ENCODE measurements at regions of chr1 and their contacts with region 1.

Region 1: DNA sequence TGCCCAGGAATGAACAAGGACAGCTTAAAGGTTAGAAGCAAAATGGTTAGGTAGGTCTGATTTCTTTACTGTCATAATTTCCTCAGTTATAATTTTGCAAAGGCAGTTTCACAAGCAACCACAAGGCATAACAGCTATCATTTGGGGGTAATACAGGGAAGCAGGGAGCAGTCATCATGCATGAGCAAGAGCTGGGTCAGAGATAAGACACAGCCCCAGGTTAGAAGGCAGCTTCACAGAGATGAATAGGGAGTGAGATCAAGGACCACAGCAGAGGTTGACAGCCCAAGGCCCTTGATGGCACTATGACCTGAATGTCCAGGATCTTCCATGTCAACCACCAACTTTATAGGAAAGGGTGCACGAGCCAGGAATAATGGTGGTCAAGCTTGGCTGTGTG is 9.0 kb upstream of the CSRP1 start:
- DNase-seq: no peak
- H3K4me3 ChIP-seq: no peak overlapping the region
- H3K4me1 ChIP-seq: peaks cover 3% of the 10 kb centered on the region; the same call in 1 of the 2 replicates
- H3K27me3 ChIP-seq: no peaks in the 10 kb centered on the region

Region 2: GRCh38 chr1:201447911-201448871 is 67.7 kb before region 1 on chr1:
- in situ Hi-C with region 1: loop called (anchors 5 kb)
- DNase-seq: peak; percentile 76 to 89
- H3K4me3 ChIP-seq: no peak overlapping the region
- H3K4me1 ChIP-seq: no peaks in the 10 kb centered on the region
- H3K27me3 ChIP-seq: no peaks in the 10 kb centered on the region

Measured in HAP-1 (cell line).